ENCODE measurements at regions of chr1 and their contacts with region 1.

Region 1: DNA sequence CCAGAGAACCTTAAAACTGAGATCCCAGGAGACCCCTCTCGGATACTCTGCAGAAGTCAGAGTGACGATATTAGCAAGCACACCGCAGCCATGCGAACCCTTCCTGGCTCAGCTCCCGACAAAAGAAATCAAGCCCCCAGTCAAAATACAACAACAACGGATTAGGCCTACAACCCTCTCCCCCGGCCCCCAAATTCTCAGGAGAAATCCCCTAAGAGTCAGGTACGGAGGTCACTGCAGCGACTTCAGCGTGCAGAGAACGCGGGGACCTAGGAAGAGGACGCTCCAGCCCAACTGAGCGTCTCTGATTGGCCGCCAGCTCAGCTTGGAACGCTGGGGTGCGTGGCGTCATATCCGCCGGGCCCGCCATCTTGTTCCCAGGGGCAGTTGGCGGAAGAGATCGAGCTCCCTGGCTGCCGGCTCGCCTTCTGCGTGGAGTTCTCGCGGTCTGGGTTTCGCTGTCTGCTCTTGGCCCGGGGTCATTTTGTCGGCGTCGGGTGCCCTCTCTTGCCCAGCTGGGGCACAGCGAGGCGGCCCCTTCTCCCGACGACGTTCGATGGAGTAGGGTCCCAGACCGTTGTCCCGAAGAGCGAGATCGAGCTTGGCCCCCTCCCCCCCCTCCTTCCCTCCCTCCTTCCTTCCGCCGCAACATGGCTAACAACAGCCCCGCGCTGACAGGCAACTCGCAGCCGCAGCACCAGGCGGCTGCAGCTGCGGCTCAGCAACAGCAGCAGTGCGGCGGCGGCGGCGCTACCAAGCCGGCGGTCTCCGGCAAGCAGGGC is at the start of gene PRPF38B:
- DNase-seq: peak; percentile 86 to 94 (median 93)
- ATAC-seq: peak; percentile 91
- H3K4me3 ChIP-seq: peak within 1 kb of the TSS; percentile 80
- H3K4me3 Mint-ChIP-seq: peak within 1 kb of the TSS; percentile 91 to 100 (median 97)
- H3K27ac ChIP-seq: peak within 1 kb of the TSS; percentile 90
- H3K27ac Mint-ChIP-seq: peak within 1 kb of the TSS; percentile 90 to 100 (median 98)
- H3K4me1 ChIP-seq: peaks cover 14 to 34% of the 10 kb centered on the region in 2 donors
- H3K4me1 Mint-ChIP-seq: peaks cover 24 to 52% (median 41%) of the 10 kb centered on the region in 7 donors
- H3K27me3 ChIP-seq: no peaks in the 10 kb centered on the region
- H3K27me3 Mint-ChIP-seq: peaks cover 0 to 10% (median 0%) of the 10 kb centered on the region in 5 donors
- total RNA-seq, gene PRPF38B: 85.5 to 136 (median 118) TPM

Region 2: GRCh38 chr1:107389410-107390396 is 1302.4 kb before region 1 on chr1:
- CTCF ChIA-PET with region 1: no interaction called
- POLR2A ChIA-PET with region 1: no interaction called
- intact Hi-C with region 1: no loop called
- DNase-seq: no peak
- ATAC-seq: no peak
- H3K4me3 ChIP-seq: no peak overlapping the region
- H3K4me3 Mint-ChIP-seq: no peak overlapping the region
- H3K27ac ChIP-seq: no peak overlapping the region
- H3K27ac Mint-ChIP-seq: no peak overlapping the region
- H3K4me1 ChIP-seq: no peaks in the 10 kb centered on the region
- H3K4me1 Mint-ChIP-seq: no peaks in the 10 kb centered on the region
- H3K27me3 ChIP-seq: no peaks in the 10 kb centered on the region
- H3K27me3 Mint-ChIP-seq: peaks cover 0 to 16% (median 6%) of the 10 kb centered on the region in 5 donors

Region 3: GRCh38 chr1:108125312-108126138 is 566.6 kb before region 1 on chr1:
- CTCF ChIA-PET with region 1: no interaction called
- POLR2A ChIA-PET with region 1: no interaction called
- intact Hi-C with region 1: no loop called
- DNase-seq: peak; percentile 35 to 77 (median 67)
- ATAC-seq: peak; percentile 97
- H3K4me3 ChIP-seq: no peak overlapping the region
- H3K4me3 Mint-ChIP-seq: no peak overlapping the region
- H3K27ac ChIP-seq: no peak overlapping the region
- H3K27ac Mint-ChIP-seq: peak overlapping the region in 4 of 9 donors; percentile 19 to 69 (median 48)
- H3K4me1 ChIP-seq: no peaks in the 10 kb centered on the region
- H3K4me1 Mint-ChIP-seq: peaks cover 4 to 10% (median 5%) of the 10 kb centered on the region in 7 donors
- H3K27me3 ChIP-seq: no peaks in the 10 kb centered on the region
- H3K27me3 Mint-ChIP-seq: no peaks in the 10 kb centered on the region

Region 4: DNA sequence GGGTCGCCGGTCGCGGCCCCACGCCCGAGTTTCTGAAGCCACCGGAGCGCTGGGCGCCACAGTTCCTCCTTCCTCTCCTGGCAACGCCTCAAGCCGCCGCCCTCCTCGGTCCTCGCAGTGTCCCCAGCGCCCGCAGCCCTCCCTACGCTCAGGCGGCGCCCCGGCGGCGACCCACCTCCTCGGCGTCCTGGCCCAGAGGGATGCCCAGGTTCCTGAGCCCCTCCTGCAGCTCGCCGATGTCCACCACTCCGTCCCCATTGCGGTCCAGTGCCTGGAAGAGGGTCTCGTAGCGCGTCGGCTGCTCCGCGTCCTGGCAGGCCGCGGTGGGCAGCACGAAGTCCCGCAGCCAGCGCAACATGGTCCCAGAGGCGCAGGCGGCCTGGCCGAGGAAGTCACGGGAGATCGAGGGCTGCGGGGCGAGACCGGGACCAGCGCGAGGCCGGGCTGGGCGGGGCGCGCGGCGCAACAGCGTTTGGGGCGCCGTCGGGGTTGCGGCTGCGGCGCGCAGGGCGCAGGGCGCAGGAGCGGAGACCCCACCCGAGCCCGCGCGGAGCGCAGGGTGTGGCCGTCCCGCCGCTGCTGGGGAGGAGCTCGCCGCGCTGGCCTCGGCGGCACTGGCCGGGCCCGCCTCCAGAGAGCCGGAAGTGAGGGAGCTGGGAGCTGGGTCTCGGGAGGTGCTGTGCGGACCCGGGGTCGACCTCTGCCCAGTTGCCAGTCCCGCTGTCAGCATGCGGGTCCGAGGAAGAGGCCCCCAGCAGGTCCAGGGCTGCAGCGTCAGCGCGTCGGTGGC is 492.2 kb before region 1 on chr1 and contains the start of gene SLC25A24:
- CTCF ChIA-PET with region 1: no interaction called
- POLR2A ChIA-PET with region 1: interaction called, 11 read pairs
- intact Hi-C with region 1: no loop called
- DNase-seq: peak; percentile 58 to 83 (median 71)
- ATAC-seq: peak; percentile 96
- H3K4me3 ChIP-seq: peak within 1 kb of the TSS; percentile 75
- H3K4me3 Mint-ChIP-seq: peak within 1 kb of the TSS; percentile 69 to 93 (median 88)
- H3K27ac ChIP-seq: peak within 1 kb of the TSS; percentile 65
- H3K27ac Mint-ChIP-seq: peak within 1 kb of the TSS; percentile 52 to 87 (median 82)
- H3K4me1 ChIP-seq: peaks cover 3 to 16% of the 10 kb centered on the region in 2 donors
- H3K4me1 Mint-ChIP-seq: peaks cover 18 to 42% (median 30%) of the 10 kb centered on the region in 7 donors
- H3K27me3 ChIP-seq: no peaks in the 10 kb centered on the region
- H3K27me3 Mint-ChIP-seq: peaks cover 0 to 18% (median 0%) of the 10 kb centered on the region in 5 donors
- total RNA-seq, gene SLC25A24: 7.1 to 27.2 (median 10.2) TPM

Region 5: GRCh38 chr1:108661030-108661620 is 31.0 kb before region 1 on chr1 and contains the start of gene HENMT1:
- CTCF ChIA-PET with region 1: interaction called, 14 read pairs
- POLR2A ChIA-PET with region 1: interaction called, 173 read pairs
- intact Hi-C with region 1: loop called (anchors 1 kb)
- DNase-seq: peak; percentile 69 to 91 (median 88)
- ATAC-seq: peak; percentile 92
- H3K4me3 ChIP-seq: peak within 1 kb of the TSS; percentile 75
- H3K4me3 Mint-ChIP-seq: peak within 1 kb of the TSS; percentile 78 to 89 (median 85)
- H3K27ac ChIP-seq: peak within 1 kb of the TSS; percentile 99
- H3K27ac Mint-ChIP-seq: peak within 1 kb of the TSS; percentile 93 to 98 (median 96)
- H3K4me1 ChIP-seq: peaks cover 7 to 9% of the 10 kb centered on the region in 2 donors
- H3K4me1 Mint-ChIP-seq: peaks cover 11 to 46% (median 37%) of the 10 kb centered on the region in 7 donors
- H3K27me3 ChIP-seq: no peaks in the 10 kb centered on the region
- H3K27me3 Mint-ChIP-seq: no peaks in the 10 kb centered on the region
- total RNA-seq, gene HENMT1: 5.8 to 17.3 (median 13.5) TPM

Region 6: DNA sequence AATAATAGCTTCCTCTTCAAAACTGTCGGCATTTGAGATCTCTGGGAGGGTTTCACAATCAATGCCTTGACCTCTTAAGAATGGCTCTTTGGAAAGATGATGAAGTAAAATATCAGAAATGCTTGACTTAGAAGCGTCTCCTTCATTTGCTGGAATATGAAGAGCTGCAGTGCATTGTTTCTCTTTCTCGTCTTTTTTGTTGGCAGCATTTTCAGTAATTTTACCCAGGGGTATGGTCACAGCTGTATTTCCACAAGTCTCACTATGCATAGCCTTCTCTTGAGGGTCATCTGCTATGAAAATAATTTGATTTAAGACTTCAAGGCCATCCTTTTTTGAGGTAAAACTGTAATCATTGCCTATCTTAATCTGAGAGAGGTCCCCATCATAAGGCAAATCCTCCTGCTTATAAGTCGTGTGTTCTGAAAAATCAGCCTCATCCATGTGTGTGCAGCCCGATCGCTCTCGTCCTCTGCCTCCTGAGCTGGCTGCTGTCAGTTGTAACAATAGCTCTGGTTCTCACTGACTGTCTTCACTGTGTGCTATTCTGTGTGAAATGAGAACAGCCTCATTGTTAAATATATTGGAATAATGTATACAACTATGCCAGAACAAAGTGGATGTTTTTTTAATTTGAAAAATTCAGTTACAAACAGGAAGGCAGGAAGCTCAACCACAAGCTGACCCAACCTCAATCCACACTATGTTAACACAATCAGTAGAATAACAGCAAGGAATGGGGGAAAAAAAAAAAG is 160.3 kb after region 1 on chr1:
- CTCF ChIA-PET with region 1: no interaction called
- POLR2A ChIA-PET with region 1: no interaction called
- intact Hi-C with region 1: no loop called
- DNase-seq: no peak
- ATAC-seq: peak; percentile 51
- H3K4me3 ChIP-seq: no peak overlapping the region
- H3K4me3 Mint-ChIP-seq: peak overlapping the region in 1 of 10 donors; percentile 40
- H3K27ac ChIP-seq: no peak overlapping the region
- H3K27ac Mint-ChIP-seq: no peak overlapping the region
- H3K4me1 ChIP-seq: no peaks in the 10 kb centered on the region
- H3K4me1 Mint-ChIP-seq: peaks cover 4 to 16% (median 7%) of the 10 kb centered on the region in 7 donors
- H3K27me3 ChIP-seq: no peaks in the 10 kb centered on the region
- H3K27me3 Mint-ChIP-seq: peaks cover 7 to 44% (median 19%) of the 10 kb centered on the region in 5 donors

Region 7: DNA sequence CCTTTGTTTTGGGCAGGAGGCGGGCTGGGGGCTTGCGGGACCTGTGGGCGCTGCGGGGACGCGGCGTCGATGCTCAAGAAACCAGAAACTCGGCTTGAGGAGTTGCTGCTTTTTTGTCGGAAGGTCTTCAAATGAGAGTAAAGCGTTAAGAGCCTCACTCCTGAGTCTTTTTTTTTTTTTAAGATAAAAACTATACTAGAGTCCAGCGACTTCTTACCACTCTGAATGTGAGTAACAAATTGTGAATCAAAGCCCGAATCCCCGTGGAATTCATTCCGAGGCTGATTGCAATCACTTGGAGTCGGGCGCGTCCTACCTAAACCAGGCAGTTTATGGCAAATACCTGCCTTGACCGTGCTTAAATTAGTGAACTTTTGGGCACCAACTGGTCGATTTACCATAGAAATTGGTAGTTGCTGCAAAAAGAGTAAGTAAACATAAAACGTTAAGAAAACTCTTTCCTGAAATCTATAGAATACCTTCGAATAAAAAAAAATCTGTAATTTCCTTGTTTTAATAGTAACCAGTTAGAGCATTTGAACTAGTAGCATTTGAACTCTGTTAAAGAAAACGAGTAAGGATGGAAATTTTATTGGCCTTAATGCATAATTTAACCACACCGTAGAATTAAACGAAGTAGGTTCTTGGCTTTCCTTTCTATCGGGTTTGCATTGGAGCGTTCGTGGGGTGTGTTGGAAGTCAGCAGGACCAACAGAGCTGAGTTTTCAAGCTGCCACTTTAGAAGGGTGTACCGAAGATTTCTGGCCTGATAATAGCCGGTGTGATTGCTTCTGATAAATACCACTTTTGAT is 185.4 kb after region 1 on chr1:
- CTCF ChIA-PET with region 1: interaction called, 5 read pairs
- POLR2A ChIA-PET with region 1: no interaction called
- intact Hi-C with region 1: loop called (anchors 1 to 5 kb)
- DNase-seq: peak in 1 of 9 donors; percentile 0
- ATAC-seq: no peak
- H3K4me3 ChIP-seq: peak overlapping the region; percentile 68
- H3K4me3 Mint-ChIP-seq: peak overlapping the region; percentile 88 to 96 (median 92)
- H3K27ac ChIP-seq: peak overlapping the region; percentile 29
- H3K27ac Mint-ChIP-seq: peak overlapping the region in 7 of 9 donors; percentile 2 to 87 (median 58)
- H3K4me1 ChIP-seq: peaks cover 0 to 4% of the 10 kb centered on the region in 2 donors
- H3K4me1 Mint-ChIP-seq: peaks cover 0 to 27% (median 12%) of the 10 kb centered on the region in 7 donors
- H3K27me3 ChIP-seq: no peaks in the 10 kb centered on the region
- H3K27me3 Mint-ChIP-seq: peaks cover 3 to 17% (median 6%) of the 10 kb centered on the region in 5 donors

Region 8: GRCh38 chr1:109075531-109076490 is 383.7 kb after region 1 on chr1 and contains the start of gene TAF13:
- CTCF ChIA-PET with region 1: no interaction called
- POLR2A ChIA-PET with region 1: interaction called, 10 read pairs
- intact Hi-C with region 1: no loop called
- DNase-seq: peak; percentile 75 to 89 (median 84)
- ATAC-seq: peak; percentile 100
- H3K4me3 ChIP-seq: peak within 1 kb of the TSS; percentile 80
- H3K4me3 Mint-ChIP-seq: peak within 1 kb of the TSS; percentile 89 to 99 (median 98)
- H3K27ac ChIP-seq: peak within 1 kb of the TSS; percentile 92
- H3K27ac Mint-ChIP-seq: peak within 1 kb of the TSS; percentile 95 to 100 (median 99)
- H3K4me1 ChIP-seq: peaks cover 5 to 8% of the 10 kb centered on the region in 2 donors
- H3K4me1 Mint-ChIP-seq: peaks cover 13 to 28% (median 20%) of the 10 kb centered on the region in 7 donors
- H3K27me3 ChIP-seq: no peaks in the 10 kb centered on the region
- H3K27me3 Mint-ChIP-seq: no peaks in the 10 kb centered on the region
- total RNA-seq, gene TAF13: 11.0 to 23.6 (median 17.6) TPM

Region 9: DNA sequence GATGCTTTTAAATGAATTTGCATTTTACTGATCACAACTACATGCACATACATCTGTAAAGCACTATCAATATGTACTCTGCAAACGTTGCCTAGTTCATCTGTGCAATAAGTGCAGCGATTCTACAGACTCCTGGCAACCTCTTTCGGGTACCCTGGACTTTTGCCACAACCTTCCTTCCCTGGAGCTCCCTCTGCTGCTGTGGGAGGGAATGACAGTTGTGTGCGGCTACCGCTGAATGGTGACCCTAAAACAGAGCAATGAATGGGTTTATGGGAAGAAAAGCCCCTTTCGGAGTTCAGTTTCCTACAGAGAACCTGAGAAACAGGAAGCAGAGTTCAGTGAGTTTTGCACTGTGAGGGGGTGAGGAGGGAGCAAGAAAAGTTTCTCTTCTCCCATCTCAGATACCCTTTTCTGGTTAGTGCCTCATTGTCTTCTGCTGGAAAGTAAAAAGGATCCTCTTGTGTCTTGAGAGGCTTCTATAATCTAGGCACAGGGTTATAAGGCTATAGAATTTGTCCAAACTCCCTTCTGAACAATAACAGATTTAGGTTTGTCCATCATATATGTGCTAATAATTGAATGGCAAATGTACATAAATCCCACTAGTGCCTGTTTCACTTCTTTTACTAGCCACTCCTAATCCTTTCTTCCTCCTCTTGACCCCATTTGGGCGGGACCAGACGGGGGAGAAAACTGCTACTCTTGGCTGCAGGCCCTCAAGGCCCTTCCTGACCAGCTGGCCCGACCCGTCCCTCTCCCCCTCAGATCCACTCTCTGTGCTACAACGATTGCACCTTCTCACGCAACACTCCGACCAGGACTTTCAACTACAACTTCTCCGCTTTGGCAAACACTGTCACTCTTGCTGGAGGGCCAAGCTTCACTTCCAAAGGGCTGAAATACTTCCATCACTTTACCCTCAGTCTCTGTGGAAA is 501.8 kb after region 1 on chr1:
- CTCF ChIA-PET with region 1: no interaction called
- POLR2A ChIA-PET with region 1: no interaction called
- intact Hi-C with region 1: loop called in 1 of 2 experiments (anchors 5 kb)
- DNase-seq: peak in 7 of 9 donors; percentile 25 to 68 (median 42)
- ATAC-seq: peak; percentile 81
- H3K4me3 ChIP-seq: no peak overlapping the region
- H3K4me3 Mint-ChIP-seq: no peak overlapping the region
- H3K27ac ChIP-seq: no peak overlapping the region
- H3K27ac Mint-ChIP-seq: peak overlapping the region in 1 of 9 donors; percentile 76
- H3K4me1 ChIP-seq: peaks cover 0 to 1% of the 10 kb centered on the region in 2 donors
- H3K4me1 Mint-ChIP-seq: peaks cover 2 to 18% (median 5%) of the 10 kb centered on the region in 7 donors
- H3K27me3 ChIP-seq: no peaks in the 10 kb centered on the region
- H3K27me3 Mint-ChIP-seq: no peaks in the 10 kb centered on the region

Region 10: DNA sequence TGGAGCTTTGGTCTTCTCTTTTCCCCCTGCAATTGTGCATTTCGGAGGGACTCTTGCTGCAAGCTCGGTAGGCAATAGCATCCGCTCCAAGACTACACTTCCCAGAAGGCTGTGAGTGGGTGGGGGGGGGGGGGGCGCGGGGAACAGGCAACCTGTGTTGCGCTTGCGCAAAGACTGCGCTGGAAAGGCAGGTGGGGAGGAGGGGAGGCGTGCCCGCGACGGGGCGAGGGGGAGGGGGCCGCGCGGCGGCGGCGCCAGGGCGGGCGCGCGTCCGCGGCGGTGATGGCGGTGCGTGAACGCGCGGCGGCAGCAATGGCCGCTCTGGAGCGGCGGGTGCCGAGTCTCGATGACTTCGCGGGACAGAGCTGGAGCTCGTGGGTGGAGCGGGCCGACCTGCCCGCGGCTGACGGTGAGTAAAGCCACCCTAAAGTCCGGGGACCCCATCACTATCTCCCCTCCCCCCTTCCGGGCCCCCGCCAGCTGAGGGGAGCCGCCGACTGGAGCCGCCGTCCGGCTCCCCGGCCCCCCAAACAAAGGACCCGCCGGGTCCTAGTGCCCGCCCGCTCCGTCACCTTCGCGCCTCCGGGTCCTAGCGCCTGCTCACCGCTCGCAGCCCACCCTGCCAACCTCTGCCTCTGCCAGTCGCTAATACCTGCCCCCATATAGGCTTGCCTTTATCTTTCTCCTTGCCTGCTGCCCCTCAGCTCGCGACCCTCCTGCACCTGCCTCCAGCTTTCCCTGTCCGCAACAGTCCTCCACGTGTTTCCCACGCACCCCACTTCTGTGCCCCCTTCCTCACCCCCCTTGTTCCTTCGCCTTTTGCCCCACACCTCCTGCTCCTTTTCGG is 791.8 kb after region 1 on chr1 and contains the start of gene ATXN7L2:
- CTCF ChIA-PET with region 1: no interaction called
- POLR2A ChIA-PET with region 1: interaction called, 5 read pairs
- intact Hi-C with region 1: loop called in 1 of 2 experiments (anchors 1 kb)
- DNase-seq: peak; percentile 89 to 95 (median 93)
- ATAC-seq: peak; percentile 91
- H3K4me3 ChIP-seq: peak within 1 kb of the TSS; percentile 98
- H3K4me3 Mint-ChIP-seq: peak within 1 kb of the TSS; percentile 93 to 99 (median 96)
- H3K27ac ChIP-seq: peak within 1 kb of the TSS; percentile 88
- H3K27ac Mint-ChIP-seq: peak within 1 kb of the TSS; percentile 83 to 97 (median 92)
- H3K4me1 ChIP-seq: peaks cover 9 to 14% of the 10 kb centered on the region in 2 donors
- H3K4me1 Mint-ChIP-seq: peaks cover 27 to 44% (median 35%) of the 10 kb centered on the region in 7 donors
- H3K27me3 ChIP-seq: no peaks in the 10 kb centered on the region
- H3K27me3 Mint-ChIP-seq: peaks cover 0 to 23% (median under 1%) of the 10 kb centered on the region in 5 donors
- total RNA-seq, gene ATXN7L2: 10.5 to 12.8 (median 11.7) TPM